GM12878 (cell line): ENCODE measurements at regions of chr14 and their contacts with region 1.

Region 1: GRCh38 chr14:65156568-65157366 is 54.5 kb upstream of the MAX start:
- DNase-seq: peak; percentile 45
- ATAC-seq: peak; percentile 92
- H3K4me3 ChIP-seq: peak overlapping the region; percentile 48; the same call in 1 of the 2 replicates
- H3K27ac ChIP-seq: peak overlapping the region; percentile 85
- H3K4me1 ChIP-seq: peaks cover 48% of the 10 kb centered on the region
- H3K27me3 ChIP-seq: no peaks in the 10 kb centered on the region
- CTCF ChIP-seq: no peak
- EP300 ChIP-seq: 0 out of 4 replicates have a peak, but pooled peaks of 1 of the 2 experiments have one; percentile 46
- POLR2A ChIP-seq: no peak
- RAD21 ChIP-seq: no peak

Region 2: DNA sequence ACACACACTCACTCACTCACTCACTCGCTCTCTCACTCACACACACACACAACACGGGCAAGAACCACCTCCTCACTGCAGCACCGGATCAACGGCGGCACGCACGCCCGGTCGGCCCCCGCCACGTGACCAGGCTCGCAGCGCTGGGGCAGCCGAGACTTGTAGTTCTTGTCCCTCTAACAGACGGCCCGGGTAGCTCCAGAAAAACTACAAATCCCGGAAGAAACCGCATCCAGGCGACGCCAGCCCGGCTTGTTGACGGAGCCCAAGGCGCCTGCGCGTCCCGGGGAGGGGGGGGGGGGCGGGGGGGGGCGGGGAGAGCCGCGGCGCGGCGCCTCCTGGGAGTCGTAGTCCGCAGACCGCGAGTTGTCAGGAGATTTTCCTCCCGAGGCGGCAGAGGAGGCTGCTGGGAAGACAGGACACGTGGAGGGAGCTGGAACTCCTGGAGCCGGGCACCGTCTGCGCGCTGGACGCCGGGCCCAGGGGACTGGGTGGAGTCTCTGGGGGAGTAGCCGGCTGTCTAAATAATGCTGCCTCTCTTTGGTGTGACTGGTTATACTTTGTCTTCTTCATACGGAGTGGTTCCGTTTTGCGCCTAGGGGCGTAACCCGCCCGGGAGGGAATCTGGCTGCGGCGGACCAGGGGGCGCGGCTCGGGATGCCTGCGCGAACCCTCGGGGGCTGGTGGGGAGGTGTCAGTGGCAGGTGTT is 54.2 kb before region 1 on chr14 and contains the start of gene MAX:
- CTCF ChIA-PET with region 1: no interaction called
- POLR2A ChIA-PET with region 1: no interaction called
- RAD21 ChIA-PET with region 1: no interaction called
- SMC1A ChIA-PET with region 1: interaction called, 5 read pairs
- in situ Hi-C with region 1: no loop called
- intact Hi-C with region 1: loop called (anchors 2 kb)
- DNase-seq: peak; percentile 90
- ATAC-seq: peak; percentile 97
- H3K4me3 ChIP-seq: peak within 1 kb of the TSS; percentile 96
- H3K27ac ChIP-seq: peak within 1 kb of the TSS; percentile 82
- H3K4me1 ChIP-seq: peaks cover 9% of the 10 kb centered on the region
- H3K27me3 ChIP-seq: no peaks in the 10 kb centered on the region
- CTCF ChIP-seq: no peak
- EP300 ChIP-seq: no peak
- POLR2A ChIP-seq: peak; percentile 89
- RAD21 ChIP-seq: no peak
- polyA plus RNA-seq, gene MAX: 21.5 to 37.2 TPM

Region 3: DNA sequence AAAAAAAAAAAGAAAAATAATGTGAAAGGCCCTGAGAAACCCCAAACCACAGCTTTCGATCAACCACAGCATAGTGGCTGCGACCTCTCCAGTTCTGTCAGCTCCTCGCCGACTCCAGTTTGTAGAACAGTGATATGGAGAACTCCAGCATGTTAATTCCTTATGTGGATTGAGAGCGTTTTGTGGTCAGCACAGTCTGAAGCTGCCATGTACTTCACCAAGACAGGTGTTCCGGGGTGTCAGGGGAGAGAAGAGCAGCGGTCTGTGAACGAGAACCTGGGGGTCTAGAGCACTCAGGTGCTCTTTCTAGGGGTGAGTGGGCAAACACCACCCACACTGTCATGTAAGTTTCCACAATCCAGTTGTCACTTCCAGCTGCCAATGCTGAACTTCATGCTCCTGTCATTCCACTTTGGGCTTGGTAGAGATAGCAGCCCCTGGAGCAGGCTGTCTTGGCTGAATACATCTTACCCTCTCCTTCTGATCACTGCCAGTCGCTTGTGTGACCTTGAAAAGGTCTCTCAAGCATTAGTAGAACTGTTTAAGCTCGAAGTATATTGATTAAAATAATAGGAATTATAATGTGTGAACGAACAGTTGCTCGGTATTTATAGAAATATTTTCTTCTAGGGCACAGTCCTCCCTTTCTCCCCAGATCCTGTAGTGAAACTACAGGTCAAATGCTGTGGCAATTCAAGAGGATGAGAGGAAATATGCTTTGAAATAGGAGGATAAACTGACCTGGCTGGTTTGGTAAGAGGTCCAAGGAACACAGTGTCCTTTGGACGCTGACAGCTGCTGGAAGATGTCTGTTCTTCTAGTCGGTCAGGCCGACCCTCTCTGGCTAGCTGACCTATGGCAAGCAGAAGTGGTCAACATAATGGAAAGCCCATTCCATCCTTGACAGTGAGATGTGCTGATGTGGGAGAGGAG is 38.7 kb before region 1 on chr14:
- CTCF ChIA-PET with region 1: interaction called, 3 read pairs
- POLR2A ChIA-PET with region 1: no interaction called
- RAD21 ChIA-PET with region 1: no interaction called
- SMC1A ChIA-PET with region 1: no interaction called
- in situ Hi-C with region 1: no loop called
- intact Hi-C with region 1: loop called (anchors 5 kb)
- DNase-seq: no peak
- ATAC-seq: peak; percentile 38; the same call in 1 of the 3 replicates
- H3K4me3 ChIP-seq: no peak overlapping the region
- H3K27ac ChIP-seq: no peak overlapping the region
- H3K4me1 ChIP-seq: no peaks in the 10 kb centered on the region; the same call in 1 of the 2 replicates
- H3K27me3 ChIP-seq: no peaks in the 10 kb centered on the region
- CTCF ChIP-seq: no peak
- EP300 ChIP-seq: no peak
- POLR2A ChIP-seq: no peak
- RAD21 ChIP-seq: no peak